H1 (cell line): ENCODE measurements at regions of chr19 and their contacts with region 1.

Region 1: GRCh38 chr19:43950834-43951645 is at the start of gene ZNF221:
- DNase-seq: peak; percentile 83 to 87
- H3K4me3 ChIP-seq: peak within 1 kb of the TSS; percentile 73 to 98 (median 84)
- H3K27ac ChIP-seq: no peak within 1 kb of the TSS
- H3K4me1 ChIP-seq: no peaks in the 10 kb centered on the region
- H3K27me3 ChIP-seq: no peaks in the 10 kb centered on the region
- CTCF ChIP-seq: peak; percentile 22 to 69 (median 62)
- EP300 ChIP-seq: no peak
- POLR2A ChIP-seq: no peak
- RAD21 ChIP-seq: peak; percentile 57 to 68
- total RNA-seq, gene ZNF221: 8.4 and 8.9 TPM in 2 replicates

Region 2: DNA sequence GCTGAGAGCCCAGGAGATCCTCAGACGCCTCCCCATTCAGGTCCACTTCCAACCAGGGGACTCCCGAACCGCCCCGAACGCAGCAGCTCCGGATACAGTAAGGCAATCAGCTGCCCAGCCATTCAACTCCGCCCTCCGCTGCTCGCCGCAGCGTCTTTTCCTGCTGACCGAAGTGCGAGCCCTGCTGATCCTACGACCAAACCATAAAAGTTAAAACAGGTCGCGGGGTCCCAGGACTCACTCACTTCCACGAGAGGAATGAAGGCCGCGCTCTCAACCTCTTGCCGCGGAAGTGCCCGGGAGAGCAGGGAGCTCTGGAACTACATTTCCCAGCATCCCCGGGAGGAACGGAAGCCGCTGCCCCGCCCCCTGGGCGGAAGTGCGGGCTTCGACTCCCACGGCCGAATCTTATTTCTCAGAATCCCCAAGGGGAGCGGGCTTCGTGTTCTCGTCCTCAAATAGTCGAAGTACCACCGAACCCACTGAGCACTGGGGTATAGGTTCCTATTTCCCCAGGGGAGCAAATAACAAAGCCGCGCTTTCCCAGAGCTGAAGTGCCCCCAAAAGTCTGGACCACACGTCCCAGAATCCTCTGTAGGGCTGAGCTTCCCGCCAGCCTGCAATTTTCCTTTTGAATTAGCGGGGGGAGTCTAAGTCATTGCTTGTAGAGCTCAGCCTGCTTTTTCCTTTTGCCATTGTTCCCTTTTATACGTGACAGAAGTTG is 15.9 kb before region 1 on chr19 and contains the start of gene ZNF45:
- CTCF ChIA-PET with region 1: interaction called, 5 read pairs
- POLR2A ChIA-PET with region 1: interaction called, 12 read pairs
- DNase-seq: peak in 1 of 2 experiments; percentile 88
- H3K4me3 ChIP-seq: peak within 1 kb of the TSS; percentile 68 to 93 (median 86)
- H3K27ac ChIP-seq: peak within 1 kb of the TSS; percentile 28; the same call in 1 of the 2 replicates
- H3K4me1 ChIP-seq: peaks cover 0 to 5% (median 1%) of the 10 kb centered on the region in 4 experiments; a peak in 1 of 7 replicates
- H3K27me3 ChIP-seq: no peaks in the 10 kb centered on the region
- CTCF ChIP-seq: no peak
- EP300 ChIP-seq: no peak
- POLR2A ChIP-seq: peak in 1 of 2 experiments; percentile 45; a peak in 1 of 3 replicates
- RAD21 ChIP-seq: no peak; a peak in 1 of 4 replicates
- total RNA-seq, gene ZNF45: 13.1 and 16.2 TPM in 2 replicates

Region 3: GRCh38 chr19:44051654-44052402 is 100.8 kb after region 1 on chr19 and contains the start of gene ZNF223:
- CTCF ChIA-PET with region 1: no interaction called
- POLR2A ChIA-PET with region 1: no interaction called
- DNase-seq: peak; percentile 77 to 89
- H3K4me3 ChIP-seq: peak within 1 kb of the TSS; percentile 59 to 85 (median 72)
- H3K27ac ChIP-seq: no peak within 1 kb of the TSS
- H3K4me1 ChIP-seq: peaks cover 0 to 2% (median 0%) of the 10 kb centered on the region in 4 experiments; a peak in 1 of 7 replicates
- H3K27me3 ChIP-seq: no peaks in the 10 kb centered on the region
- CTCF ChIP-seq: no peak
- EP300 ChIP-seq: no peak
- POLR2A ChIP-seq: peak in 1 of 2 experiments; percentile 60; a peak in 1 of 3 replicates
- RAD21 ChIP-seq: no peak
- total RNA-seq, gene ZNF223: 3.9 and 4.3 TPM in 2 replicates